ENCODE measurements at regions of chr10 and their contacts with region 1.

Region 1: GRCh38 chr10:101012525-101013364 is 13.1 kb downstream of the LZTS2 start:
- DNase-seq: peak; percentile 96
- ATAC-seq: peak; percentile 86
- H3K4me3 ChIP-seq: peak overlapping the region in 1 of 2 experiments; percentile 13; a peak in 1 of 4 replicates
- H3K27ac ChIP-seq: peak overlapping the region; percentile 39
- H3K4me1 ChIP-seq: peaks cover 31 to 69% of the 10 kb centered on the region in 2 experiments
- H3K27me3 ChIP-seq: no peaks in the 10 kb centered on the region
- CTCF ChIP-seq: peak in 2 of 3 experiments; percentile 88 to 99; a peak in 4 of 6 replicates
- POLR2A ChIP-seq: no peak
- RAD21 ChIP-seq: no peak

Region 2: DNA sequence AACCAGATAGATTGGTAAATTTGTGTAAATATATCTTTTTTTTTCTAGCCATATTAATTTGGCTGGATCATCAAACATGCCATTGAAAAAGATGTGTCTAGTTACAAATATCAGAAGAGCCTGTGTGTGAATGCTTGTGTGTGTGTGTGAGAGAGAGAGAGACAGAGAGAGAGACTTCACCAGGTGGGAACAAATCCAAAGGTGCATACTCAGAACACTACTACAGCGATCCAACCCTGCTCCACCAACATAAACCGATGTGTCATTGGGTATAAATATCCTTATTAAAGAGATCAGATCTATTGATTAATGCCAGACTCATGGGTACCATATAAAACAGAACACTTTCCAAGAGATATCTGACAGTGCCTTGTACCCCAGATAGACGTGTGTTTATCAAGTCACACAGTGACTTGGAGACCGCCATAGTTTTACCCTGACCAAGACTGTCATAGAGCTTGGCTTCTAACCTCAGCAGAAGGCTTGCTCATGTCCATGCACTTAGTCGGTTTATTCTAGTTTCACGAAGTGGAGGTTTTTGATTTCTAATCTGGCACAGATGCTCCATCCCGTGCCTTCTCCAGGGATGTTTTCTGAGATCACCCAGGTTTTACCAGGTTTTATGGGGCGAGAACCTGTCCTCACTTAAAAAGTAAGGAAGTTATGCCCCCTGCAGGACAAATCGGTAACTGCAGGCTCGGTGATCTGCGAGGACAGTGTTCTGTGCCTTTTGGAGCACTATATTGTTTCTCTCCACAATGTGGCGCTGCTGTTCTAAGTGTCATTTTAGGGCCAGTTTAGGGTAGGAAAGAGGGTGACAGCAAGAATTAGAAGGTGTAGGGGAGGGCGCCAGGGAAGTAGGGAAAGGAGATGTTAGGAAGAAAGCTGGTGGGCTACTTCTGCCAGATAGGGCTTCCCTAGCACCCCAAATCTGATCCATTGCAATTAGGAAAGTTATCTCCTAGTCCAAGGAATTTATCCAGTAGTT is 579.2 kb before region 1 on chr10:
- CTCF ChIA-PET with region 1: no interaction called
- POLR2A ChIA-PET with region 1: no interaction called
- RAD21 ChIA-PET with region 1: no interaction called
- intact Hi-C with region 1: loop called (anchors 5 kb)
- DNase-seq: peak; percentile 97
- ATAC-seq: peak; percentile 96
- H3K4me3 ChIP-seq: no peak overlapping the region
- H3K27ac ChIP-seq: no peak overlapping the region
- H3K4me1 ChIP-seq: peaks cover 0 to 9% of the 10 kb centered on the region in 2 experiments; a peak in 2 of 4 replicates
- H3K27me3 ChIP-seq: no peaks in the 10 kb centered on the region
- CTCF ChIP-seq: peak; percentile 100
- POLR2A ChIP-seq: no peak
- RAD21 ChIP-seq: peak; percentile 100

Region 3: GRCh38 chr10:100743626-100744135 is 269.1 kb before region 1 on chr10:
- CTCF ChIA-PET with region 1: no interaction called
- POLR2A ChIA-PET with region 1: no interaction called
- RAD21 ChIA-PET with region 1: no interaction called
- intact Hi-C with region 1: loop called (anchors 10 kb)
- DNase-seq: peak; percentile 80
- ATAC-seq: peak; percentile 69
- H3K4me3 ChIP-seq: no peak overlapping the region
- H3K27ac ChIP-seq: no peak overlapping the region
- H3K4me1 ChIP-seq: peaks cover 8 to 31% of the 10 kb centered on the region in 2 experiments; a peak in 3 of 4 replicates
- H3K27me3 ChIP-seq: no peaks in the 10 kb centered on the region
- CTCF ChIP-seq: peak; percentile 98 to 99 (median 98)
- POLR2A ChIP-seq: no peak
- RAD21 ChIP-seq: peak; percentile 98

Region 4: GRCh38 chr10:100969187-100970075 is 43.3 kb before region 1 on chr10 and contains the start of gene SEMA4G:
- CTCF ChIA-PET with region 1: interaction called, 9 read pairs
- POLR2A ChIA-PET with region 1: no interaction called
- RAD21 ChIA-PET with region 1: no interaction called
- intact Hi-C with region 1: loop called (anchors 1 kb)
- DNase-seq: peak; percentile 21
- ATAC-seq: peak; percentile 85
- H3K4me3 ChIP-seq: peak within 1 kb of the TSS; percentile 66 to 86
- H3K27ac ChIP-seq: peak within 1 kb of the TSS; percentile 40; the same call in 1 of the 2 replicates
- H3K4me1 ChIP-seq: peaks cover 7 to 32% of the 10 kb centered on the region in 2 experiments; a peak in 3 of 4 replicates
- H3K27me3 ChIP-seq: no peaks in the 10 kb centered on the region
- CTCF ChIP-seq: peak in 2 of 3 experiments; percentile 86 to 92; a peak in 5 of 6 replicates
- POLR2A ChIP-seq: no peak
- RAD21 ChIP-seq: no peak
- total RNA-seq, gene SEMA4G: 29.4 TPM

Region 5: DNA sequence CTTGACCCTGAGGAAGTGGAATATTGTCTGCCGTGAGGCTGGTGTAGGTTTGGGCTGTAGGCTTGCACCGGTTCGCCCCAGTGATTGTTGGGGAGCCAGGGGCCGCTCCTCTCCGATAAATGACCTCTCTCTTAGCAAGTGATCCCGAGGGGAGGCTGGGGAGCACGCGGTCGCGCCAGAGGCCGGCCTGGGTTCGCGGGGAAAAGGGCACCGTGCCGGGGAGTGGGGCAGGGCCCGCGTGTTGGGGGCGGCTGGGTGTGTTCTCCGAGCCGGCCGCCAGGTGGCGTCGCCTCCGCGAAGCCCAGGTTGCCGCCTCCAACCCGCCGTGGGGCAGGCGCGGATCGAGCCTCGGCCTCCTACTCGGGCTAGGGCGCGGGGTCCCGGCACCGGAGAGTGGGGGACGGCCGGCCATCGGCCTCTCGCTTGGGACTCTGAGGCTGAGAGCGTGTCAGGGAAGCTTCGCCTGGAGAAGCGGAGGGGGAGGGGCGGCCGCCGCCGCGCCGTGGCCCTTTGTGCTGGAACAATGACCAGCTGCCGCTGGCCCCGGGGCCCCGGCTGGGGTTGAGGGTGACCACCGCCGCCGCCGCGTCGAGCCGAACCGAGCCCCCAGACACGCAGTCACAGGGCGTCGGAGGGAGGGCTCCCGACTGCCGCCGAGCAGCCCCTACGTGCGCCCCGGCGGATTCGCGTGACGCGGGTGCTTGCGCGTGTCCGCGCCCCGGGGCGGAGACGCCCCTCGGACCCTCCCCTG is 13.6 kb before region 1 on chr10:
- CTCF ChIA-PET with region 1: interaction called, 118 read pairs
- POLR2A ChIA-PET with region 1: interaction called, 9 read pairs
- RAD21 ChIA-PET with region 1: interaction called, 5 to 10 read pairs
- intact Hi-C with region 1: loop called (anchors 1 kb)
- DNase-seq: no peak
- ATAC-seq: peak; percentile 51
- H3K4me3 ChIP-seq: peak overlapping the region; percentile 88 to 92
- H3K27ac ChIP-seq: peak overlapping the region; percentile 87
- H3K4me1 ChIP-seq: peaks cover 21 to 55% of the 10 kb centered on the region in 2 experiments
- H3K27me3 ChIP-seq: no peaks in the 10 kb centered on the region
- CTCF ChIP-seq: peak in 2 of 3 experiments; percentile 93 to 96; a peak in 4 of 6 replicates
- POLR2A ChIP-seq: no peak
- RAD21 ChIP-seq: no peak

Region 6: DNA sequence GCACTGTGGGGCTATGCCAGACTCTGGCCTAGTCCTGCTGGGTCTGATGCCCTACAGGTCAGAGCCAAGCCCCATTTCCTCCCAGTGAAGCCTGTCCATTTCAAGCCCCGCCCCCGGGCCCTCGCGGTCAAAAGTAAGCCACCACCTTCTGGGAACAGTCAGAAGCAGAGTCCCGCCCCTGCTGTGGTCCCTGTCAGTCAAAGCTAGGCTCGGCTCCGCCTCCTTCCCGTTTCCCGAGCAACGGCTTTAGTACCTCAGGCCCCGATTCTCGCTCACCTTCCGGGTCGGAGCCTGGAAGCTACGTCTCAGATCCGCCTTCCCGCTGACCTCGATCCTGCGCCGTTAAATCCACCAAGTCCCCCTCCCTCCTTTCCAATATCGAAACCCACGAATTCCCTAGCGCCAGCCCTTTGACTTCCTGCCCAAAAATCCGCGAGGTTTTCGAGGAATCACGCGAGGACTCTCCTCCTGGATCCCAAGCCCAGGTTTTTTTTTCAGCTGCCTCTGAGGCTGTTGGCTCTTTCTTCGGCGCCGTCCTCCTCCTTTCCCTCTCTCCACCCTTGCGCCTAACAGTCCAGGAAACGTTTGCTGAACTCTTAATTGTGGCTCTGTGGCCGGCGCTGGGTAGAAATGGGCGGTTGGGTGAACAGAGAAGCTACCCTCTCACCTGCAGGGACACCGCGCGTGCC is 30.1 kb after region 1 on chr10:
- CTCF ChIA-PET with region 1: interaction called, 19 read pairs
- POLR2A ChIA-PET with region 1: no interaction called
- RAD21 ChIA-PET with region 1: interaction called in 1 of 2 experiments, 3 read pairs
- intact Hi-C with region 1: no loop called
- DNase-seq: peak; percentile 97
- ATAC-seq: peak; percentile 91
- H3K4me3 ChIP-seq: peak overlapping the region; percentile 55 to 59
- H3K27ac ChIP-seq: peak overlapping the region; percentile 84
- H3K4me1 ChIP-seq: peaks cover 26 to 33% of the 10 kb centered on the region in 2 experiments
- H3K27me3 ChIP-seq: no peaks in the 10 kb centered on the region
- CTCF ChIP-seq: no peak
- POLR2A ChIP-seq: peak; percentile 82
- RAD21 ChIP-seq: no peak

Measured in HCT116 (cell line).